ENCODE measurements at regions of chr3 and their contacts with region 1.

Region 1: GRCh38 chr3:66472313-66473134 is 28.3 kb downstream of the LRIG1 start:
- DNase-seq: peak; percentile 94
- H3K4me3 ChIP-seq: peak overlapping the region in 1 of 3 experiments; percentile 0
- H3K27ac ChIP-seq: peak overlapping the region; percentile 92
- H3K4me1 ChIP-seq: peaks cover 54% of the 10 kb centered on the region
- H3K27me3 ChIP-seq: no peaks in the 10 kb centered on the region
- CTCF ChIP-seq: no peak
- POLR2A ChIP-seq: peak; percentile 30

Region 2: GRCh38 chr3:66336333-66336766 is 136.2 kb before region 1 on chr3:
- CTCF ChIA-PET with region 1: no interaction called
- POLR2A ChIA-PET with region 1: no interaction called
- dilution Hi-C with region 1: no loop called
- intact Hi-C with region 1: loop called (anchors 1 kb)
- DNase-seq: peak; percentile 96
- H3K4me3 ChIP-seq: peak overlapping the region in 1 of 3 experiments; percentile 5
- H3K27ac ChIP-seq: peak overlapping the region; percentile 85
- H3K4me1 ChIP-seq: peaks cover 31% of the 10 kb centered on the region
- H3K27me3 ChIP-seq: no peaks in the 10 kb centered on the region
- CTCF ChIP-seq: no peak
- POLR2A ChIP-seq: no peak

Region 3: GRCh38 chr3:66442254-66443117 is 30.0 kb before region 1 on chr3:
- CTCF ChIA-PET with region 1: interaction called, 5 read pairs
- POLR2A ChIA-PET with region 1: no interaction called
- dilution Hi-C with region 1: no loop called
- intact Hi-C with region 1: loop called (anchors 1 kb)
- DNase-seq: peak; percentile 92
- H3K4me3 ChIP-seq: no peak overlapping the region
- H3K27ac ChIP-seq: peak overlapping the region; percentile 79
- H3K4me1 ChIP-seq: peaks cover 34% of the 10 kb centered on the region
- H3K27me3 ChIP-seq: no peaks in the 10 kb centered on the region
- CTCF ChIP-seq: no peak
- POLR2A ChIP-seq: no peak

Region 4: DNA sequence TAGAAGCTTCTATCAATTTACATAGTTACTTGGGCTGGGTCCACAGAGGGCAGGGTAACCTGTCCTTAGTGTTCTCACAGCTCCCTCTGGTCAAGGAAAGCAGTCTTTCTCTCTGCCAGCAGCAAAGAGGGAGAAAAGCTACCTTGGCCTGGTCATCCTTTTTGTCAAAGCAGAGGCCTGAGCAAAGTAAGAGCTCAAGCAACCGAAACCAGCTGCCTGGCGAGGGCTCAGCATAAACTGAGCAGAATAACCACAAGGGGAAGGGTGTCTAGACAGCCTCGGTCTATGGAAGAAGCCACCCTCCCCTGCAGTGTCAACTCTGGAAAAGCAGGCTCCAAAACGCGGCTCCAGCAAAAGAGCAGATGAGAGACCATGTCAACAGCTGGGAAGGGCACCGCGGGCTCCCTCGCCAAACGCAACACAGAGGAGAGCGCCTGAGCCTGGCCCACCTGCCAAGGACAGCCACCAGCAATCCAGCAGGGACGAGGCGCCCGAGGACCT is 10.9 kb after region 1 on chr3:
- CTCF ChIA-PET with region 1: interaction called, 23 read pairs
- POLR2A ChIA-PET with region 1: interaction called, 4 read pairs
- dilution Hi-C with region 1: no loop called
- intact Hi-C with region 1: loop called (anchors 1 kb)
- DNase-seq: no peak
- H3K4me3 ChIP-seq: no peak overlapping the region
- H3K27ac ChIP-seq: peak overlapping the region; percentile 28
- H3K4me1 ChIP-seq: peaks cover 38% of the 10 kb centered on the region
- H3K27me3 ChIP-seq: no peaks in the 10 kb centered on the region
- CTCF ChIP-seq: no peak
- POLR2A ChIP-seq: no peak

Region 5: GRCh38 chr3:66998113-66998903 is 525.8 kb after region 1 on chr3 and contains the start of gene KBTBD8:
- CTCF ChIA-PET with region 1: no interaction called
- POLR2A ChIA-PET with region 1: no interaction called
- dilution Hi-C with region 1: no loop called
- intact Hi-C with region 1: loop called (anchors 2 kb)
- DNase-seq: peak; percentile 99
- H3K4me3 ChIP-seq: peak within 1 kb of the TSS; percentile 76 to 93 (median 82)
- H3K27ac ChIP-seq: peak within 1 kb of the TSS; percentile 35
- H3K4me1 ChIP-seq: peaks cover 17% of the 10 kb centered on the region
- H3K27me3 ChIP-seq: peaks cover 0 to 15% of the 10 kb centered on the region in 2 experiments
- CTCF ChIP-seq: no peak
- POLR2A ChIP-seq: peak; percentile 45
- total RNA-seq, gene KBTBD8: 1.1 and 3.2 TPM in 2 replicates